ENCODE measurements at regions of chr12 and their contacts with region 1.

Region 1: DNA sequence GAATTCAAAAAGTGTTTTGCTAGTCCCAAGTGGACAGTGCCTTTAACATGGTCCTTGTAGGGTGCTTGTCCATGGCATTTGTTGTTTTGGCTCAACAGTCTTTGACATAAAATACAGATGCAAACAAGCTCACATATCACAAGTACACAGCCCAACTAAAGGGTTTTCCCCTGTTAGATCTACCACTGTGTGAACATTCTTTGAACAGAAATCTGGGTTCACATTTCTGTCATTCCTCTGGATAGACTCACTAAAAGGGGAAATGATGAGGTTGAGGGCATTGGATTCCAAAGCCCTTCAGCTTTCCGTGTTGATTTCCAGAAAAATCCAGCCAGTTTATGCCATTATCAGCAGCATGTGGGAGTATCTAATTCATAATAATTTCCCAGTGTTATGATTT is 54.1 kb downstream of the EP400 start:
- DNase-seq: no peak
- ATAC-seq: no peak
- H3K4me3 ChIP-seq: no peak overlapping the region
- H3K4me3 Mint-ChIP-seq: no peak overlapping the region
- H3K27ac ChIP-seq: no peak overlapping the region
- H3K27ac Mint-ChIP-seq: no peak overlapping the region
- H3K4me1 ChIP-seq: no peaks in the 10 kb centered on the region
- H3K4me1 Mint-ChIP-seq: no peaks in the 10 kb centered on the region
- H3K27me3 ChIP-seq: no peaks in the 10 kb centered on the region
- H3K27me3 Mint-ChIP-seq: no peaks in the 10 kb centered on the region
- CTCF ChIP-seq: no peak

Region 2: DNA sequence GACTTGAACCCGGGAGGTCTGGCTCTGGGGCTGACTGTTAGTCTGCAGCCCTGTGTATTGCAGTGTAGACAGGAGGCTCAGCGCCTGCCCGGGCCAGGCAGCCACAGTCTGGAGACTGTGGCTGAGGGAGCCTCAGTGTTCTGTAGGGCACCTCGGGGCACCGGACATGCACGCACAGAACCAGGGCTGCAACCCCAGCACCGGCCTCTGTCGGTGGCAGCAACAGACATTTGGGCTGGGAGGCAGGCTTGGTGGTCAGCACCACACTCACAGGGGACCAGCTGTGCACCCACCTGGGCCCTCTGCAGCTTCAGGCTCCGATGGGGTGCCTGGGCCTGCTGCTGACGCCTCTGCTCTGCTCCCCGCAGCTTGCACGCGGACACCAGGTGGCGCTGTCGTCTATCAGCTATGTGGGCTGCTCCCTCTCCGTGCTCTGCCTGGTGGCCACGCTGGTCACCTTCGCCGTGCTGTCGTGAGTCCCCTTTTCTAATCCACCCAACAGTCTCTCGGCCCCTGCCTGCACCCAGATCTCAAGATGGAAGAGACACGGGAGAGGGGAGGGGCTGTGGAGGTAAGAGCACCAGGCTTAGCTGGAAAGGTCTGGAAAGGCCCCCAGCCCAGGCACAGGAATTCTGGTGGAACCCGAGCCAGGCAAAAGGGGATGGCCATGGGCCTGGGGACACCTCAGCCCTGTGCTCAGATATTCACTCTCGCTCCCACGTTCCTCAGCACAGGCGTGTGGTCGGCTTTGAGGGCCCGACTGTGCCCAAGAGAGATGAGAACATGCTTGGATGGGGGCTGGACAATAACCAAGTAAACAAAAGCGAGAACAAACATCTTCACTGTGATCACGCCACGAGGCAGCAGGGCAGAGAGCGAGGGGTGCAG is 899.1 kb before region 1 on chr12:
- intact Hi-C with region 1: loop called (anchors 5 kb)
- DNase-seq: peak; percentile 69 to 86
- ATAC-seq: peak; percentile 65 to 86 (median 68)
- H3K4me3 ChIP-seq: no peak overlapping the region
- H3K4me3 Mint-ChIP-seq: no peak overlapping the region
- H3K27ac ChIP-seq: no peak overlapping the region
- H3K27ac Mint-ChIP-seq: no peak overlapping the region
- H3K4me1 ChIP-seq: peaks cover 37% of the 10 kb centered on the region
- H3K4me1 Mint-ChIP-seq: peaks cover 4 to 16% of the 10 kb centered on the region in 2 donors
- H3K27me3 ChIP-seq: no peaks in the 10 kb centered on the region
- H3K27me3 Mint-ChIP-seq: peaks cover 0 to 6% of the 10 kb centered on the region in 2 donors
- CTCF ChIP-seq: peak; percentile 89

Measured in natural killer cell (primary cell).